ENCODE measurements at regions of chr11 and their contacts with region 1.

Region 1: GRCh38 chr11:64778508-64779346 is at the start of gene SF1:
- DNase-seq: peak; percentile 99 to 100 (median 100)
- H3K4me3 ChIP-seq: peak within 1 kb of the TSS; percentile 94 to 98
- H3K4me3 Mint-ChIP-seq: peak within 1 kb of the TSS; percentile 89 to 96 (median 94)
- H3K27ac ChIP-seq: peak within 1 kb of the TSS; percentile 98
- H3K27ac Mint-ChIP-seq: peak within 1 kb of the TSS; percentile 98 to 100 (median 98)
- H3K4me1 ChIP-seq: peaks cover 57% of the 10 kb centered on the region
- H3K4me1 Mint-ChIP-seq: peaks cover 41 to 70% (median 55%) of the 10 kb centered on the region in 4 donors
- H3K27me3 ChIP-seq: no peaks in the 10 kb centered on the region
- H3K27me3 Mint-ChIP-seq: peaks cover 0 to 4% of the 10 kb centered on the region in 2 donors
- total RNA-seq, gene SF1: 805 to 832 TPM

Region 2: GRCh38 chr11:64240394-64241174 is 538.1 kb before region 1 on chr11 and contains the start of gene FKBP2:
- CTCF ChIA-PET with region 1: no interaction called
- POLR2A ChIA-PET with region 1: interaction called, 3 read pairs
- intact Hi-C with region 1: loop called (anchors 10 kb)
- DNase-seq: peak; percentile 97 to 99 (median 99)
- H3K4me3 ChIP-seq: peak within 1 kb of the TSS; percentile 67 to 73
- H3K4me3 Mint-ChIP-seq: peak within 1 kb of the TSS; percentile 87 to 97 (median 88)
- H3K27ac ChIP-seq: peak within 1 kb of the TSS; percentile 99
- H3K27ac Mint-ChIP-seq: peak within 1 kb of the TSS; percentile 99 to 100 (median 100)
- H3K4me1 ChIP-seq: peaks cover 38% of the 10 kb centered on the region
- H3K4me1 Mint-ChIP-seq: peaks cover 14 to 52% (median 29%) of the 10 kb centered on the region in 4 donors
- H3K27me3 ChIP-seq: no peaks in the 10 kb centered on the region
- H3K27me3 Mint-ChIP-seq: no peaks in the 10 kb centered on the region
- total RNA-seq, gene FKBP2: 41.4 to 46.4 TPM

Region 3: GRCh38 chr11:64793271-64794172 is 14.8 kb after region 1 on chr11:
- CTCF ChIA-PET with region 1: interaction called, 4 read pairs
- POLR2A ChIA-PET with region 1: interaction called, 143 read pairs
- intact Hi-C with region 1: no loop called
- DNase-seq: no peak
- H3K4me3 ChIP-seq: no peak overlapping the region
- H3K4me3 Mint-ChIP-seq: no peak overlapping the region
- H3K27ac ChIP-seq: no peak overlapping the region
- H3K27ac Mint-ChIP-seq: peak overlapping the region in 5 of 7 donors; percentile 23 to 78 (median 68)
- H3K4me1 ChIP-seq: peaks cover 4% of the 10 kb centered on the region
- H3K4me1 Mint-ChIP-seq: peaks cover 7 to 18% (median 13%) of the 10 kb centered on the region in 4 donors
- H3K27me3 ChIP-seq: no peaks in the 10 kb centered on the region
- H3K27me3 Mint-ChIP-seq: no peaks in the 10 kb centered on the region

Region 4: GRCh38 chr11:64810271-64810890 is 31.7 kb after region 1 on chr11 and contains the start of gene MEN1:
- CTCF ChIA-PET with region 1: interaction called, 4 read pairs
- POLR2A ChIA-PET with region 1: interaction called, 143 read pairs
- intact Hi-C with region 1: loop called (anchors 1 kb)
- DNase-seq: peak; percentile 76 to 86 (median 80)
- H3K4me3 ChIP-seq: peak within 1 kb of the TSS; percentile 73 to 96
- H3K4me3 Mint-ChIP-seq: peak within 1 kb of the TSS; percentile 92 to 99 (median 95)
- H3K27ac ChIP-seq: peak within 1 kb of the TSS; percentile 79
- H3K27ac Mint-ChIP-seq: peak within 1 kb of the TSS; percentile 78 to 97 (median 95)
- H3K4me1 ChIP-seq: peaks cover 12% of the 10 kb centered on the region
- H3K4me1 Mint-ChIP-seq: peaks cover 9 to 31% (median 19%) of the 10 kb centered on the region in 4 donors
- H3K27me3 ChIP-seq: no peaks in the 10 kb centered on the region
- H3K27me3 Mint-ChIP-seq: no peaks in the 10 kb centered on the region
- total RNA-seq, gene MEN1: 41.3 to 42.7 TPM

Region 5: DNA sequence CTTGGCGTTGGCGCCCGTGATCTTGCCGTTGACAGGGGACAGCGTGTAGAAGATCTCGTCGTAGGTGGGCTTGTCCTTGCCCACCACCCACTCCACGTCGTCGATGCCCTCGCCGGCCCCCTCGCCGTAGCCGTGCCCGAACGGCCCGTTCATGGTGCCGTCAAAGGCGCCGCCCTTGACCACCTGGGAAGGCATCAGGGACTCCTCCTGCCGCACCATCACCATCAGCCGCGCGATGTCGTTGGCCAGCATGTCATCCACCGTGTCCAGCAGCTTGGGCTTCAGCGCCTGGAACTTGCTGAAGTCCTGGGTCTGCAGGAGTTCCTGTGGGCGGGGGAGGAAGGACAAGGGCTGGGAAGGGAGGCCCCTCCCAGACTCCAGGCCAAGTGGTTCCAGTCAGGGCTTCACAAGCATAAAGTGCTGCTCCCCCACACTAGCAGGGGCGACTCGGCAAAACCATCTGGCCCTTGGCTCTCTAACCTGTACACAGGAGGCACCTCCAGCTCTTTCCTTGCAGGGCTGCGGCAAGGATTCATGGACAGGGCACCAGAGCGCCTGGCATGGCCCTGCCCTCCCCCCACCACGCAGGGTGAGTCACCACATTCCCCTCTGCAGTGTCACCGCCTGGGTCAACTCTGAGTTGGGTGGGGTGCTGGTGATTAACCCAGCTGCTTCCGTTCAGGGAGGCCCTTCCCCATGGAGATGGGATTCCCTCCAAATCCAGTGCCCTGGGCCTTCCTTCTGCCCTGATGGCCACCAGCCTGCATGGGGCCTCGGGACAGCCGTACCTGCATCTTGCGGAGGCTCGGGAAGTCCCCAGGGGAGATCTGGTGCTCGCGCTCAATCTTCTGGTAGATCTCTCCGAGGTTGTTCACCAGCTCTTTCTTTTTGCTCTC is 76.1 kb after region 1 on chr11:
- CTCF ChIA-PET with region 1: interaction called, 3 read pairs
- POLR2A ChIA-PET with region 1: interaction called, 17 read pairs
- intact Hi-C with region 1: no loop called
- DNase-seq: peak in 2 of 5 donors; percentile 40 to 83
- H3K4me3 ChIP-seq: peak overlapping the region; percentile 6 to 21
- H3K4me3 Mint-ChIP-seq: peak overlapping the region; percentile 48 to 89 (median 74)
- H3K27ac ChIP-seq: peak overlapping the region; percentile 70
- H3K27ac Mint-ChIP-seq: peak overlapping the region; percentile 90 to 99 (median 93)
- H3K4me1 ChIP-seq: peaks cover 96% of the 10 kb centered on the region
- H3K4me1 Mint-ChIP-seq: peaks cover 60 to 92% (median 76%) of the 10 kb centered on the region in 4 donors
- H3K27me3 ChIP-seq: no peaks in the 10 kb centered on the region
- H3K27me3 Mint-ChIP-seq: no peaks in the 10 kb centered on the region

Region 6: DNA sequence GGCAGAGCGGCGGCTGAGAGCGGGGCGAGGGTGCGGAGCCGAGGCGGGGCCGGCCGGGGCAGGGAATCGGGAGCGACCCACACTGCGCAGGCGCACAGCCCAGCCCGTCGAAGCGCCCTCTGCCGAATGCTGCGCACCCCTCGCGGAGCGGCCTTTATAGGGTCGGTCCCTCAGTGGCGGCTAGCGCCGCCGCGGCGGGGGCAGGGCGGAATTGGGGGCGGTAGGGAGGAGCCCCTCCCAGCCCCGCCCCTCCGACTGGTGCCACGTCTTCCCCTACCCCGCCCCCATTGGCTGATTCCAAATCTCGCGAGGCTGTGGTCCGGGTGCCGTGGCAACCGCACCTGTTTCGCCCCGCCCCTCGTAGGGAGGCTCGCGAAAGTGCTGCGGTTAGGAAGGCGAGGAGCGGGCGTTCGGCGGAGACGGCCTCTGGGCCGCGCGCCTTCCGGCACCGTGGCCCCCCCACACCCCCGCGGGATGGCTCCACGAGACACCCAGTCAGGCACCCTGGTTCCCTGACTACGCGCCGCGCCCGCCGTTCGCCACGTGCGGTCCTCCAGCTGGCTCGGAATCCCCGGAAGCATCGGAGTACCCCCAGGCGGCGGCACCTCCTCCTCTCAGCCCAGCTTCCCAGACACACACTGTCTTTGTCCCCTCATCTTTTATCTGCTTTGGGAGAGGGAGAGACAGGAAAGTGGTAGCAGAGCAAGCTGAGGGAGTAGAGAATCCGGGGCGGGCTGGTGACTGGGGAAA is 99.9 kb after region 1 on chr11 and contains the start of gene EHD1:
- CTCF ChIA-PET with region 1: interaction called, 3 read pairs
- POLR2A ChIA-PET with region 1: interaction called, 25 read pairs
- intact Hi-C with region 1: no loop called
- DNase-seq: peak; percentile 99 to 100 (median 99)
- H3K4me3 ChIP-seq: peak within 1 kb of the TSS; percentile 82 to 99
- H3K4me3 Mint-ChIP-seq: peak within 1 kb of the TSS; percentile 99 to 100 (median 99)
- H3K27ac ChIP-seq: peak within 1 kb of the TSS; percentile 92
- H3K27ac Mint-ChIP-seq: peak within 1 kb of the TSS; percentile 96 to 98 (median 97)
- H3K4me1 ChIP-seq: peaks cover 58% of the 10 kb centered on the region
- H3K4me1 Mint-ChIP-seq: peaks cover 34 to 77% (median 47%) of the 10 kb centered on the region in 4 donors
- H3K27me3 ChIP-seq: no peaks in the 10 kb centered on the region
- H3K27me3 Mint-ChIP-seq: no peaks in the 10 kb centered on the region
- total RNA-seq, gene EHD1: 268 to 279 TPM

Region 7: GRCh38 chr11:65083834-65084597 is 305.3 kb after region 1 on chr11 and contains the starts of genes CDCA5 and ZFPL1:
- CTCF ChIA-PET with region 1: no interaction called
- POLR2A ChIA-PET with region 1: no interaction called
- intact Hi-C with region 1: loop called (anchors 1 kb)
- DNase-seq: peak; percentile 94 to 98 (median 97)
- H3K4me3 ChIP-seq: peak within 1 kb of the TSS; percentile 74 to 75
- H3K4me3 Mint-ChIP-seq: peak within 1 kb of the TSS; percentile 92 to 96 (median 94)
- H3K27ac ChIP-seq: peak within 1 kb of the TSS; percentile 94
- H3K27ac Mint-ChIP-seq: peak within 1 kb of the TSS; percentile 97 to 99 (median 98)
- H3K4me1 ChIP-seq: peaks cover 25% of the 10 kb centered on the region
- H3K4me1 Mint-ChIP-seq: peaks cover 9 to 42% (median 26%) of the 10 kb centered on the region in 4 donors
- H3K27me3 ChIP-seq: no peaks in the 10 kb centered on the region
- H3K27me3 Mint-ChIP-seq: no peaks in the 10 kb centered on the region
- total RNA-seq, gene CDCA5: 0.41 to 0.64 TPM
- total RNA-seq, gene ZFPL1: 48.6 to 51.9 TPM

Region 8: DNA sequence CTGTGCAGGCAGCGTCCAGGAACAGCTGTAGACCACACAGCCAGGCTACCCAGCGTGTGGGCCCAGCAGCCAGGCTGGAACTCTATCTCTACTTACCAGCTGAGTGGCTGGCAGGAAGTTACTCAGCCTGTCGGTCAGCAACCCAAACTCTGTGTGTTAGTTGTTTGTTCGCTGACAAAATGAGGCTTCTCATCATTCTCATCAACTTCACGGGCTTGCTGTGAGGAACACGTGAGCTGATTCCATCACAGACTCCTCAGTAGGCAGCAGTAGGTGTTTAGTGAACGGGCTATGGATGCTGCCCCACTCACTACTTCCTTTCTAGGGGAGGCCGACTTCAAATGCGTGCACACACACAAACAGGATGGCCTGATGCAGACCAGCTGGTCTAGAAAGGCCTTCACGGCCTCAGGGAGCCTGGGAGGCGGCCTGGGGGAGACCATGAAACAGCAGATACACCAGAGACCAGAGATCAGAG is 390.5 kb after region 1 on chr11:
- CTCF ChIA-PET with region 1: no interaction called
- POLR2A ChIA-PET with region 1: no interaction called
- intact Hi-C with region 1: no loop called
- DNase-seq: no peak
- H3K4me3 ChIP-seq: no peak overlapping the region
- H3K4me3 Mint-ChIP-seq: no peak overlapping the region
- H3K27ac ChIP-seq: no peak overlapping the region
- H3K27ac Mint-ChIP-seq: peak overlapping the region in 4 of 7 donors; percentile 68 to 84 (median 76)
- H3K4me1 ChIP-seq: no peaks in the 10 kb centered on the region
- H3K4me1 Mint-ChIP-seq: no peaks in the 10 kb centered on the region
- H3K27me3 ChIP-seq: no peaks in the 10 kb centered on the region
- H3K27me3 Mint-ChIP-seq: no peaks in the 10 kb centered on the region